ENCODE measurements at regions of chr6 and their contacts with region 1.

Region 1: GRCh38 chr6:157430834-157431233 is 49.8 kb downstream of the ZDHHC14 start:
- DNase-seq: no peak
- H3K4me3 ChIP-seq: no peak overlapping the region
- H3K27ac ChIP-seq: no peak overlapping the region
- H3K4me1 ChIP-seq: peaks cover 31% of the 10 kb centered on the region
- H3K27me3 ChIP-seq: no peaks in the 10 kb centered on the region
- CTCF ChIP-seq: no peak

Region 2: DNA sequence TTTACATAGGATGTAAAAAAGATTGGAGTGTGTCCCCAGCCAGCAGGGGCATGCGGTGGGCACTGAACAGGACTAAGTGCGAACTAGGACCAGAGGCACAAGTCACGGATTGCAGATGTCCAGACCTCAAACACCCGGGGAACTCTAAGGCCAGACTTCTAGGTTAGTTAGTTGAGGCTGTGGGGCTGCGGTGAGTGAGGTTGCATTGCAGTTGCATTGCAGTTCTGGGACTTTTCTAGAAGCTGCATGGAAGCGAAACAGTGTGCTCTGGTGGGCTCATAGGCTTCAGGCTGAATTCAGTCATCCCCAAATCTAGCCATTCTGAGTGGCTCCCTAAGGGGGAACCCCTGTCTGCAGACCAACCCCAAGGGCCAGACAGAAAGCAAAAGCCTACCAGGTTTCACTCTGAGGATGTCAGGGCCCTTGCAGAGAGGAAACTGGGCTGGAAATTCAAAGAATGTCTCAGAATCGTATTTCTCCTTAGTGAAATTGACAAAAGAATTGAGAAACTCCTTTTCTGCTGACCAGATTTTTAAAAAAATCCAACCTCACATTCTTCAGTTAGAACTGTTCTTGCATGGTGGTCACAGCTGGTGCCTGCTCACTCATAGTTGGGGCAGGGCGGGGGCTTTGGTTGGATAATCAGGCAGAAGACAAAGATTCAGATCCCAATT is 132.9 kb after region 1 on chr6:
- CTCF ChIA-PET with region 1: no interaction called
- POLR2A ChIA-PET with region 1: no interaction called
- intact Hi-C with region 1: no loop called
- DNase-seq: no peak
- H3K4me3 ChIP-seq: no peak overlapping the region
- H3K27ac ChIP-seq: no peak overlapping the region
- H3K4me1 ChIP-seq: no peaks in the 10 kb centered on the region
- H3K27me3 ChIP-seq: no peaks in the 10 kb centered on the region
- CTCF ChIP-seq: no peak

Region 3: GRCh38 chr6:159119791-159120190 is 1689.0 kb after region 1 on chr6:
- CTCF ChIA-PET with region 1: no interaction called
- POLR2A ChIA-PET with region 1: interaction called, 11 read pairs
- intact Hi-C with region 1: no loop called
- DNase-seq: no peak
- H3K4me3 ChIP-seq: no peak overlapping the region
- H3K27ac ChIP-seq: no peak overlapping the region
- H3K4me1 ChIP-seq: no peaks in the 10 kb centered on the region
- H3K27me3 ChIP-seq: no peaks in the 10 kb centered on the region
- CTCF ChIP-seq: no peak

Measured in PC-9 (cell line).